ENCODE measurements at regions of chr20 and their contacts with region 1.

Region 1: DNA sequence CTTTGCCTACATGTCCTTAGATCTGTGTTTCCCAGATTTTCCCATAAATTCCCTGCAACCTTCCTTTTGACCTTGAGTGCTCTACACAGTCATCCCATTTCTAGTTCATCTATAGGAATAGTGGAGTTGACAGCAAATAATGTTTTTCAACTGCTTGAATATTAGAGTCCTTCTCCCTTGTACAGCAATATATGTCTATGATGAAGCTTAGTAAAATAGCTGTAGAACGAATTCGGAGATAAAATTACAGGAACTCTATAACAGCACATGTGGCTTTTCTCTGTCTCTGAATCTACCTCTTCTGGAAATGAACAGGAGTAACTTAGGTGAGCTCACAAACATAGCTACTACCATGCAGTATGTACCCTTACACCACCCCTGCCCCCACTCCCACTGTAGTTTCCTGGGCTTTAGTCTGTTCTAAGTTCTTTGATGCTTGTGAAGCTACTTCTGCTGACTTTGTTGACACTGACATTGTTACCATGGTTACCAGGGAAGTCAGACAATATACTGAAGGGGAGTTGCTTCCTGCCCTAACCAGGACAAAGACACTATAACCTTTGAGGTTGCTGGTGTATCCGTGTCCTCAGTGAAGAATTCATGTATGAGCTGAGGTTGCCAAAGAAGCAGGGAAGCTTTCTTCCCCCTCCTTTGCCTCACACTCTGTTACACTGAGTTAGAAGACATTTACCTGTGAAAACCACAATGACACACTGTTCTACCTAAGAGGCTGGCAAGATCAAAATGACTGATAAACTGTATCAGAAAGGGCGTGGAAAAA is 35.8 kb upstream of the SHLD1 start:
- DNase-seq: peak; percentile 69 to 98 (median 82)
- ATAC-seq: peak; percentile 89
- H3K4me3 ChIP-seq: no peak overlapping the region
- H3K4me3 Mint-ChIP-seq: peak overlapping the region; percentile 46
- H3K27ac ChIP-seq: peak overlapping the region; percentile 69 to 92
- H3K27ac Mint-ChIP-seq: peak overlapping the region; percentile 74
- H3K4me1 ChIP-seq: peaks cover 38% of the 10 kb centered on the region
- H3K4me1 Mint-ChIP-seq: peaks cover 49% of the 10 kb centered on the region
- H3K27me3 ChIP-seq: no peaks in the 10 kb centered on the region
- H3K27me3 Mint-ChIP-seq: no peaks in the 10 kb centered on the region
- CTCF ChIP-seq: no peak

Region 2: GRCh38 chr20:5658912-5659345 is 55.5 kb before region 1 on chr20:
- CTCF ChIA-PET with region 1: interaction called, 3 read pairs
- POLR2A ChIA-PET with region 1: interaction called, 4 read pairs
- intact Hi-C with region 1: loop called (anchors 5 kb)
- DNase-seq: peak in 12 of 14 experiments; percentile 14 to 87 (median 35)
- ATAC-seq: peak; percentile 95
- H3K4me3 ChIP-seq: no peak overlapping the region
- H3K4me3 Mint-ChIP-seq: no peak overlapping the region
- H3K27ac ChIP-seq: no peak overlapping the region
- H3K27ac Mint-ChIP-seq: peak overlapping the region; percentile 18
- H3K4me1 ChIP-seq: peaks cover 11% of the 10 kb centered on the region
- H3K4me1 Mint-ChIP-seq: peaks cover 12% of the 10 kb centered on the region
- H3K27me3 ChIP-seq: no peaks in the 10 kb centered on the region
- H3K27me3 Mint-ChIP-seq: no peaks in the 10 kb centered on the region
- CTCF ChIP-seq: no peak

Region 3: GRCh38 chr20:5749952-5750779 is 35.7 kb after region 1 on chr20 and contains the start of gene SHLD1:
- CTCF ChIA-PET with region 1: interaction called, 3 read pairs
- POLR2A ChIA-PET with region 1: interaction called, 20 read pairs
- intact Hi-C with region 1: loop called (anchors 2 kb)
- DNase-seq: peak; percentile 67 to 91 (median 76)
- ATAC-seq: peak; percentile 98
- H3K4me3 ChIP-seq: peak within 1 kb of the TSS; percentile 75
- H3K4me3 Mint-ChIP-seq: peak within 1 kb of the TSS; percentile 96
- H3K27ac ChIP-seq: peak within 1 kb of the TSS; percentile 53 to 61
- H3K27ac Mint-ChIP-seq: peak within 1 kb of the TSS; percentile 87
- H3K4me1 ChIP-seq: peaks cover 23% of the 10 kb centered on the region
- H3K4me1 Mint-ChIP-seq: peaks cover 37% of the 10 kb centered on the region
- H3K27me3 ChIP-seq: no peaks in the 10 kb centered on the region
- H3K27me3 Mint-ChIP-seq: no peaks in the 10 kb centered on the region
- CTCF ChIP-seq: no peak
- total RNA-seq, gene SHLD1: 7.0 to 7.3 TPM

Region 4: DNA sequence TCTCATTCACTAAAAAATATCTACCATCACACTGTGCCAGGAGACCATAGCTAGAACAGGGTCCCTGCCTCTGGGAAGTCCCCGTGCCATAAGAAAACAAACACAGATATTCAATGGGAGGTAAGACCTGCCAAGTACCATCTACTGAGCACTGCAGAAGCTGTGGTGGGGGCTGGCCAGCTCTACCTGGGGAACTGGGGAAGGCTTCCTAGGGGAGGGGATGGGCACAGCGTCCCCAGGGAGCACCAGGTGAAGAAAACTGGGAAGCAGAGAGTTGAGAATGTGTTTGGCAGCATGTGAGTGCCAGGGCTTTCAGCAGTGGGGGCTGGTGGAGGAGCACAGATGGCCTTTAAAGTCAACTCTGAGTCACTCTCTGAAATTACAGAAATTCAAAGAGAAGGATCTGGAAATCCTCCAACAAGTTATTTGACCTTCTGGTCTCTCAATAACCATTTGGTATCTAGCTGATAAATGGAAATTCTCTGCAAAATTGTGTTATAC is 120.9 kb after region 1 on chr20:
- CTCF ChIA-PET with region 1: no interaction called
- POLR2A ChIA-PET with region 1: no interaction called
- intact Hi-C with region 1: loop called in 1 of 2 experiments (anchors 10 kb)
- DNase-seq: peak in 11 of 14 experiments; percentile 14 to 69 (median 32)
- ATAC-seq: peak; percentile 58
- H3K4me3 ChIP-seq: no peak overlapping the region
- H3K4me3 Mint-ChIP-seq: peak overlapping the region; percentile 88
- H3K27ac ChIP-seq: peak overlapping the region; percentile 76 to 88
- H3K27ac Mint-ChIP-seq: peak overlapping the region; percentile 96
- H3K4me1 ChIP-seq: peaks cover 24% of the 10 kb centered on the region
- H3K4me1 Mint-ChIP-seq: peaks cover 52% of the 10 kb centered on the region
- H3K27me3 ChIP-seq: no peaks in the 10 kb centered on the region
- H3K27me3 Mint-ChIP-seq: no peaks in the 10 kb centered on the region
- CTCF ChIP-seq: no peak

Region 5: GRCh38 chr20:5895626-5896025 is 181.2 kb after region 1 on chr20:
- CTCF ChIA-PET with region 1: no interaction called
- POLR2A ChIA-PET with region 1: no interaction called
- intact Hi-C with region 1: no loop called
- DNase-seq: peak in 1 of 14 experiments; percentile 11
- ATAC-seq: no peak
- H3K4me3 ChIP-seq: no peak overlapping the region
- H3K4me3 Mint-ChIP-seq: no peak overlapping the region
- H3K27ac ChIP-seq: no peak overlapping the region
- H3K27ac Mint-ChIP-seq: no peak overlapping the region
- H3K4me1 ChIP-seq: no peaks in the 10 kb centered on the region
- H3K4me1 Mint-ChIP-seq: no peaks in the 10 kb centered on the region
- H3K27me3 ChIP-seq: peaks cover 0 to 10% of the 10 kb centered on the region in 2 experiments
- H3K27me3 Mint-ChIP-seq: peaks cover 30% of the 10 kb centered on the region
- CTCF ChIP-seq: no peak

Measured in CD4-positive, alpha-beta T cell (primary cell).